GM10248 (cell line): ENCODE measurements at regions of chr22 and their contacts with region 1.

Region 1: DNA sequence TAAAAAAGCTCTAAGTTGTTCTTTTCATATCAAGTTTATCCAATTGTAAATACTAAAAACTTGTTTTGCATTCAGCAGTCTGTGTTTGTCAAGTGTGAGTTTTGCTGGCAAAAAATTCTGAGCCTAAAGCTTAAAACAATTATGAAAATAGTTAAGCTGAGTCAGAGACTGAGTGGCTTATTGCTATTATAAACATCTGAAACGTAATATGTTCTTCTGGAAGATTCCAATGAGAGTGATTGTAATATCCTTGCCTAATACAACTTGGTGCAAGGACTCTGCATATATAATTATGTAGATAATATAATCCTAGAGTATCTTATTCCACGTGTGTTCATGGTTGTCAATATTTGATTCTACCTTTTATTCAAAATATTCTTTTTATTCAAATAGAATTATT is 14.1 kb upstream of the NUP50 start:
- DNase-seq: no peak
- CTCF ChIP-seq: no peak

Region 2: DNA sequence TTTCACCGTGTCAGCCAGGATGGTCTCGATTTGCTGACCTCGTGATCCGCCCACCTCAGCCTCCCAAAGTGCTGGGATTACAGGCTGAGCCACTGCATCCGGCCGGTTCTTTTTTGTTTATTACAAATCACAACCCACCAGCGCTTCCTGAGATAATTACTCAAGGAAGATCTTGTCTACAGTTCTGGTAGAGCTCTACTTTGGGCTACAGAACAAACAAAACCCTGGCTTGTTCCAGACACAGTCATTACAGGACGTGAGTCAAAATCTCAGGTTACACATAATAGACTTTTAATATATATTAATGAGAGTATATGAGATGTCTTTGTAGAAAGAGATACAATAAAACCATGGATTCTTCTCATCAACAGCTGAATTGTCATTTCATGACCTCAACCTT is 28.7 kb before region 1 on chr22:
- CTCF ChIA-PET with region 1: no interaction called
- POLR2A ChIA-PET with region 1: no interaction called
- DNase-seq: no peak
- CTCF ChIP-seq: no peak

Region 3: DNA sequence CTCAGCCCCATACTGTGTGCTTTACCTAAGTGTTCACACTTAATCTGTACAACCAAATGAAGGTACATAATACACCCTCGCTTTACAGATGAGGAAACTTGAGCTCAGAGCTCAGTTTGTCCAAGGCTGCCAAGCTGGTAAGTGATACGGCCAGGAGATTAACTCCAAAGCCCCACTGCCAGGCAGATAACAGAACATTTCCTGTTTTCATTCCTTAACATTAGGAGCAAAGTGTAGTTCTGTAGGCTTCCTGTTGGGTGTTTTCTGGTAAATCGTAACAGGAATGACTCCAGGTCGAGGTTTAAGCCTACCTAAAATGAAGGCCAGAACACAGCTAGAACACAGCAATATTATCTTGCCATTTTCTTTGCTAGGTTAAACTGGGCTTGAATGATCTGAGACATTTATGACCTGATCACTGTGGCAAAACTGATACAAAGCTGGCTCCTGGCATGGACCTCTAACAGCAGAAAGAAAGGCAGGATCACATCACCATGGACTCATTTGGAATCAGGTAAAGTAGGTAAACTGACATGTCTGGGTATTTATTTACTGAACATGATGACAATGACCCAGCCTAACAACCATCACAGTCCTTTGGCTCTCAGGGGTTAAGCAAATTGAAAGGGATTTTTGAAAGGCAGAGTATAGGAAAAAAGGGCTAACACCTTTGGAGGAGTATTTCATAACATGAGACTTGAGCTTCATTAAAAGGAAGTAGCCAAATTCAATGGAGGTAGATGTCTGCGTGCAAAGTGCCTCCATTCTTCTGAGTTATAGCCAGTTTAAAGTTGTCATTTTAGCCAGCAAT is 10.2 kb after region 1 on chr22:
- CTCF ChIA-PET with region 1: interaction called, 10 read pairs
- POLR2A ChIA-PET with region 1: no interaction called
- DNase-seq: no peak
- CTCF ChIP-seq: no peak

Region 4: GRCh38 chr22:46267431-46268279 is 1118.0 kb after region 1 on chr22 and contains the start of gene TTC38:
- CTCF ChIA-PET with region 1: no interaction called
- POLR2A ChIA-PET with region 1: interaction called, 10 read pairs
- DNase-seq: peak; percentile 95
- CTCF ChIP-seq: no peak